Upper lobe of right lung (tissue), 1 donor: ENCODE measurements at regions of chr11 and their contacts with region 1.

Region 1: GRCh38 chr11:2807025-2807681 is 78.4 kb downstream of the CDKN1C start:
- DNase-seq: peak; percentile 90
- ATAC-seq: peak; percentile 75
- H3K4me3 ChIP-seq: peak overlapping the region; percentile 31
- H3K27ac ChIP-seq: peak overlapping the region; percentile 11
- H3K4me1 ChIP-seq: peaks cover 30% of the 10 kb centered on the region
- H3K27me3 ChIP-seq: no peaks in the 10 kb centered on the region
- CTCF ChIP-seq: no peak

Region 2: GRCh38 chr11:2741377-2742131 is 65.6 kb before region 1 on chr11:
- intact Hi-C with region 1: no loop called
- DNase-seq: peak; percentile 60
- ATAC-seq: peak; percentile 29
- H3K4me3 ChIP-seq: no peak overlapping the region
- H3K27ac ChIP-seq: peak overlapping the region; percentile 58
- H3K4me1 ChIP-seq: peaks cover 3% of the 10 kb centered on the region
- H3K27me3 ChIP-seq: no peaks in the 10 kb centered on the region
- CTCF ChIP-seq: no peak

Region 3: GRCh38 chr11:2885676-2886081 is 78.5 kb after region 1 on chr11 and contains the start of gene CDKN1C:
- intact Hi-C with region 1: loop called (anchors 10 kb)
- DNase-seq: peak; percentile 92
- ATAC-seq: peak; percentile 84
- H3K4me3 ChIP-seq: peak within 1 kb of the TSS; percentile 79
- H3K27ac ChIP-seq: peak within 1 kb of the TSS; percentile 86
- H3K4me1 ChIP-seq: peaks cover 12% of the 10 kb centered on the region
- H3K27me3 ChIP-seq: no peaks in the 10 kb centered on the region
- CTCF ChIP-seq: no peak
- total RNA-seq, gene CDKN1C: 42.1 TPM